Lower leg skin (tissue), 4 donors: ENCODE measurements at regions of chr2 and their contacts with region 1.

Region 1: GRCh38 chr2:170393861-170394498 is 216.0 kb downstream of the MYO3B start:
- DNase-seq: no peak
- H3K4me3 ChIP-seq: no peak overlapping the region
- CTCF ChIP-seq: no peak
- POLR2A ChIP-seq: no peak

Region 2: DNA sequence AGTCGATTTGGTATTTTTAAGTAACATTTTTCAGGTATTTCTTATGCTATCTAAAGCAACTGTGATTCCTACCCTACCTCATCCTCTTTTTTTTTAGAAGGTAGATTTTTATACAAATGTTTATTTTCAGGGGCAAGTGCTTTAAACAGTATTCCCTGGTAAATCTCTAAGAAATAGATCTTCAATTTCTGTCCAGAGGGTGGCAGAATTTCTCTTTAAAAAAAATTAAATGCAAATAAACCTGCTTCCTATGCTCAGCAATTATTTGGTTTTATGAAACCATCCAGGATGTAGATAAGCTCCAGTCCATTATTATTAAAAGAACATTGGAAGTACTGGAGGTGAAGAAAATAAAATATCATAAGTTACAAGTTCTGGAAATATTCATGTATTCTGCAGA is 24.1 kb before region 1 on chr2:
- intact Hi-C with region 1: loop called (anchors 1 kb)
- DNase-seq: no peak
- H3K4me3 ChIP-seq: no peak overlapping the region
- CTCF ChIP-seq: no peak
- POLR2A ChIP-seq: no peak